Activated CD4-positive, alpha-beta T cell treated with anti-CD3 and anti-CD28 coated beads, Interleukin-2, amount 10 ng/mL, durations not matched to agents 24 days and 14 days (primary cell): ENCODE measurements at regions of chr12 and their contacts with region 1.

Region 1: GRCh38 chr12:49707128-49707811 is at the start of gene FMNL3:
- DNase-seq: peak; percentile 100
- H3K4me3 Mint-ChIP-seq: peak within 1 kb of the TSS; percentile 97
- H3K27ac Mint-ChIP-seq: peak within 1 kb of the TSS; percentile 89
- H3K4me1 Mint-ChIP-seq: peaks cover 43% of the 10 kb centered on the region
- H3K27me3 Mint-ChIP-seq: peaks cover 23% of the 10 kb centered on the region
- total RNA-seq, gene FMNL3: 39.1 and 39.8 TPM in 2 replicates

Region 2: GRCh38 chr12:49636979-49637755 is 70.1 kb before region 1 on chr12:
- intact Hi-C with region 1: loop called (anchors 2 kb)
- DNase-seq: peak; percentile 88
- H3K4me3 Mint-ChIP-seq: no peak overlapping the region
- H3K27ac Mint-ChIP-seq: no peak overlapping the region
- H3K4me1 Mint-ChIP-seq: peaks cover 11% of the 10 kb centered on the region
- H3K27me3 Mint-ChIP-seq: no peaks in the 10 kb centered on the region

Region 3: DNA sequence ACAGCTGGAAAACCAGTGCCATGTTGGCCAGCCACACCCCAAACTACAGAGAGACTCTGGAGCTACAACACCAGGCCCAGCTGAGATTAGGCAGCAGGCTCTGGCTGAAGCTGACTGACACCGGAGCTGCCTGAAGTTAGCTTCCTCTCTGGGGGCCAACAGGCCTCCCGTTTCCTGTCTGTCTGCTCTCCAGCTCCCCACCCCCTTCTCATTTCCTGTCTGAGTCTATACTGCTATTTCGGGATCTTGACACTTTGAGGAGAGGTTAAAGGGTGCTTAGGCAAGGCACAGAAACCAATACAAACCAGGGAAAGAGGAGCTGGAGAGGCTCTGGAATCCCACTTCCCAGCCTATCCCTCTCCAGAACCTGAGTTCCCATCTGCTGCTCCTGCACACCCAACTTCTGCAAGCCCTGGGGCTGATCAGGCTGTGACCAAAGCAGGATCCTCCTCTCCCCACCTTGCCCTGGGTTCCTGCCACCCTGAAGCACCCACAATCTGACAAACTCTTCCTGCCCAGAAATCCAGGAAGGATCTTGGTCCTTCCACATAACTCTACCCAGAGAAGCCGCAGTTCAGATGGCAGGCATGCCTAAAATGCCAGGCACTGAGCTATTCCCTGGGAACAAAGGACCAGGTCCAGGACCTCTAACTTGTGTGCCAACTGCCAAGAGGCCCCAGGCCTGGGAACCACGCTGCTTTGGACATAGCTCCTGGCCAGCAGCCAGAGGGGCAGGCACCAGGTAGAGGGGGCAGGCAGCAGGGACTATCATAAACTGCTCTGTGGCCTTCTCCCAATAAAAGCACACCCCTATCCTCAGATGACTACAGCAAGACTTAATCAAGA is 44.0 kb before region 1 on chr12:
- intact Hi-C with region 1: loop called (anchors 1 kb)
- DNase-seq: peak; percentile 92
- H3K4me3 Mint-ChIP-seq: peak overlapping the region; percentile 80
- H3K27ac Mint-ChIP-seq: peak overlapping the region; percentile 93
- H3K4me1 Mint-ChIP-seq: peaks cover 66% of the 10 kb centered on the region
- H3K27me3 Mint-ChIP-seq: no peaks in the 10 kb centered on the region

Region 4: GRCh38 chr12:49750027-49750995 is 43.0 kb after region 1 on chr12:
- intact Hi-C with region 1: loop called (anchors 2 kb)
- DNase-seq: peak; percentile 77
- H3K4me3 Mint-ChIP-seq: peak overlapping the region; percentile 68
- H3K27ac Mint-ChIP-seq: peak overlapping the region; percentile 79
- H3K4me1 Mint-ChIP-seq: peaks cover 60% of the 10 kb centered on the region
- H3K27me3 Mint-ChIP-seq: no peaks in the 10 kb centered on the region

Region 5: GRCh38 chr12:49828133-49829091 is 121.1 kb after region 1 on chr12 and contains the start of gene NCKAP5L:
- intact Hi-C with region 1: loop called (anchors 1 kb)
- DNase-seq: peak; percentile 97
- H3K4me3 Mint-ChIP-seq: peak within 1 kb of the TSS; percentile 100
- H3K27ac Mint-ChIP-seq: peak within 1 kb of the TSS; percentile 95
- H3K4me1 Mint-ChIP-seq: peaks cover 16% of the 10 kb centered on the region
- H3K27me3 Mint-ChIP-seq: peaks cover 18% of the 10 kb centered on the region
- total RNA-seq, gene NCKAP5L: 4.8 and 5.0 TPM in 2 replicates